WTC11 (cell line): ENCODE measurements at regions of chr17 and their contacts with region 1.

Region 1: DNA sequence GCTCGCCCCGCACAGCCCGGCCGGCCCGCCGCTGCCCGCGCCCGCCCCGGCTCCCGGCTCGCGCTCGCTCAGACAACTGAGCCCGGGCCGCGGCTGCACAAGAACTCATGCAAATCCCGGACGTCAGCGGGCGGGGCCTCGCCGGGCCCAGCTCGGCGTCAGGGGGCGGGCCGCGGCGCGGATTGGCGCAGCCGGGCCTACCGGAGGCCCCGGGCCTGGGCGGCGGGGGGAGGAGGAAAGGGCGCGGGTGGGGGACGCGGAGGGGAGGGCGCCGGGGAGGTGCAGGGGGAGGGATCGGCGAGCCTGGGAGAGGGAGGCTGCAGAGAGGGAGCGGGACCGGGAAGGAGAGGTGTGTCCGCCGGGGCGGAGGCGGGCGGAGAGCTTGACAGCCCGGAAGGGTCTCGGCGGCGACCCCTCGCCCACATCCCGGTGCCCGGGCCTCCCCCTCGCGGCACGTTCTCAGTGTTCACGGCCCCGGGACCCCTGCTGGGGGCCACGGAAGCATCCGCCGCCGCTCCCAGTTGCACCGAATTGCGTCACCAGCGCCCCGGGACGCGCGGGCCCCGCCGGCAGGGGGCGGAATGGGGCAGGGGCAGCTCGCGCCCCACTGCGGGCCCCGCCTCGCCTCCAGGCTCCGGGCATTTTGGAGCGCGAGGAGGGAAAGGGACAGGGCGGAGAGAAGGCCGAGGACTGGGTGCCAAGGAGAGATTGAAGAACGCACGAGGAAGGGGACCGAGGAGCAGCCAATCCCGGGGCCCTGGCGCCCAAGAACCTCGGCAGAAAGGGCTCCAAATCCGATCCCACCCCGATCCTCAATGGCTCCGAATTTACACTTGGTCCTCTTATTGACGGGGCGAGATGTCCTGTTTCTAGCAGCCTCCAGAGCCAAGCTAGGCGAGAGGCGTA is at the start of gene CBX4:
- DNase-seq: peak; percentile 91
- ATAC-seq: peak; percentile 24
- H3K4me3 Mint-ChIP-seq: peak within 1 kb of the TSS; percentile 72
- H3K27ac Mint-ChIP-seq: no peak within 1 kb of the TSS; the same call in 1 of the 2 replicates
- H3K4me1 Mint-ChIP-seq: peaks cover 31% of the 10 kb centered on the region
- H3K27me3 Mint-ChIP-seq: peaks cover 89% of the 10 kb centered on the region
- CTCF ChIP-seq: peak; percentile 57
- total RNA-seq, gene CBX4: 3.2 to 3.9 TPM (median 3.3 TPM) in 3 replicates

Region 2: DNA sequence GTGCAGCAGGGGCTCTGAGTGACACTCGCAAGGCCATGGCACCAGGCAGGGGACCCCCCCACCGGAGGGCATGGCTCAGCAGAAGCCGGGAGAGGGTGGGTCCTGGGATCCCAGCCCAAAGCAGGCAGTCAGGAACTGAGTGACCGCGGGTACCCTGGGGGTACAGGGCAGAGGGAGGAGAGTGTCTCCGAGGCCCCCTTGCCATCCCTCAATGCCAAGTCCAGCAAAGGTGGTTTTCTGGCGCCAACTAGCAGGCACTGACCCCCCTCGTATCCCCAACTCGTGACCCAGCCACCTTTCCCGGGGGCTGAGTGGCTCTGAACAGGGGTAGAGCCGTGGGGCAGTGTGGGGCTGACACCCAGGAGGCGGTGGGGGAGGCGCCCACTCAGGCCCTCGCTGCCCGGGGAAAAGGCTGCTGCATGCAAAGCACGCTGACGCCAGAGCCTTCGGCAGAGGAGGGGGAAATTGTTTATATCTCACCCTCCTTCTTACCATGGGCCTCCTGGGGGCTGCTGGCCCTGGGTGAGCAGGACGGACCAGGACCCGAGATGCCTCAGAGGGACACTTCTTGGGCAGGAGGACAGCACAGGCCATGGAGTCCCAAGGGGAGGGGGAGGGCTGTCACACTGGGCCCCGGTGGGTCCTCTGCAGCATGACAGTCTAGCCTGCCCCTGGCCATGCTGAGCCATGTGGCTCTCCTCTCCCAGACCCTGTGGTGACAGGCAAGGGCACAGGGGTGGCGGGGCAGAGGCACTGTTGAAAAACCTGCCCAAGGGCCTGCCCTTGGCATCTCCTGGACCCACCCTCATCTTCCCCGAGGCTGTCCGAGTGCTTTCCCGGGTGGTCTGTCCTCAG is 123.4 kb before region 1 on chr17:
- CTCF ChIA-PET with region 1: no interaction called
- POLR2A ChIA-PET with region 1: no interaction called
- DNase-seq: no peak
- ATAC-seq: no peak
- H3K4me3 Mint-ChIP-seq: no peak overlapping the region
- H3K27ac Mint-ChIP-seq: no peak overlapping the region
- H3K4me1 Mint-ChIP-seq: no peaks in the 10 kb centered on the region
- H3K27me3 Mint-ChIP-seq: peaks cover 4% of the 10 kb centered on the region; the same call in 1 of the 2 replicates
- CTCF ChIP-seq: no peak

Region 3: GRCh38 chr17:79741751-79742588 is 97.6 kb before region 1 on chr17:
- CTCF ChIA-PET with region 1: interaction called, 64 read pairs
- POLR2A ChIA-PET with region 1: no interaction called
- DNase-seq: peak; percentile 95
- ATAC-seq: peak; percentile 80
- H3K4me3 Mint-ChIP-seq: peak overlapping the region; percentile 53
- H3K27ac Mint-ChIP-seq: no peak overlapping the region
- H3K4me1 Mint-ChIP-seq: peaks cover 7% of the 10 kb centered on the region
- H3K27me3 Mint-ChIP-seq: peaks cover 68% of the 10 kb centered on the region
- CTCF ChIP-seq: peak; percentile 92

Region 4: GRCh38 chr17:79796763-79797491 is 42.7 kb before region 1 on chr17 and contains the start of gene CBX8:
- CTCF ChIA-PET with region 1: interaction called, 119 read pairs
- POLR2A ChIA-PET with region 1: interaction called, 11 read pairs
- DNase-seq: peak; percentile 100
- ATAC-seq: peak; percentile 71
- H3K4me3 Mint-ChIP-seq: peak within 1 kb of the TSS; percentile 68
- H3K27ac Mint-ChIP-seq: no peak within 1 kb of the TSS
- H3K4me1 Mint-ChIP-seq: peaks cover 47% of the 10 kb centered on the region
- H3K27me3 Mint-ChIP-seq: peaks cover 94% of the 10 kb centered on the region
- CTCF ChIP-seq: no peak
- total RNA-seq, gene CBX8: 1.8 to 2.1 TPM (median 2.0 TPM) in 3 replicates

Region 5: DNA sequence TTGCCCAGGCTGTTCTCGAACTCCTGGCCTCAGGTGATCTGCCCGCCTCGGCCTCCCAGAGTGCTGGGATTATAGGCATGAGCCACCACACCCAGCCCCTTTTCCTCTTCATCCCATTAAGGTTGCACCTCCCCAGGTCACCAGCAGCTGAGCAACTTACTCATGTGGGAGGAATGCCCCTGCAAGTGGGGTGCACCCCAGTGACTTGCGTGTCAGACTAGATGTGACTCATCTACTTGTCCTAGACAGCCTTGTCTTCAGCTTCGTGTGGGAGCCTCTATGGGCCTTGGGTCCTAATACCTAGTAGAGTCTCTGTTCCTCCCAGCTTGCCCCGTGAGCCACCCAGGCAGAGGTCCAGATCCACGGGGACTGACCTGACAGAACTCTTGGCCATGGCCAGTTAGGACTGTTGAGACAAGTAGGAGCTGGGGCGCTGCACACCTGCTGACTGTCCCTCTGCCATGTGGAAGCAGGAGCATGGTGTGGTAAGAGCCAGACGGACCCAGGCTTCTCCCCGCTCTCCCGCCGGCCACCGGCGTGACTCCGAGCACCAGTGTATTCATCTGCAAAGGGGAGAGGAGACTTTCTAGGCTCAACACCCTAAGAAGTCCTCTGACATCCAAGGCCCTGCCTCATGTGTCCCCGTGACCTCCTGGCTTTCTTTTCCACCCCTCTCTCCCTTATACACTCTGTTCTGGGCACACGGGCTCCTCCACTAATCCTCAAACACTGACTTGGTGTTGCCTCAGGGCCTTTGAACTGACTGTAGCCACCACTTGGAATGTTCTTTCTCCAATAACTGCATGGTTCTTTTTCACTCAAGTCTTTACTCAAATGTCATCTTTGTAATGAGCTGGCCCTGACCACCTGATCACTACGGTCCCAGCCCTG is 11.2 kb after region 1 on chr17:
- CTCF ChIA-PET with region 1: interaction called, 60 read pairs
- POLR2A ChIA-PET with region 1: interaction called, 3 read pairs
- DNase-seq: no peak
- ATAC-seq: no peak
- H3K4me3 Mint-ChIP-seq: no peak overlapping the region
- H3K27ac Mint-ChIP-seq: no peak overlapping the region
- H3K4me1 Mint-ChIP-seq: peaks cover 3% of the 10 kb centered on the region
- H3K27me3 Mint-ChIP-seq: peaks cover 31% of the 10 kb centered on the region
- CTCF ChIP-seq: no peak

Region 6: GRCh38 chr17:79923974-79924638 is 84.5 kb after region 1 on chr17:
- CTCF ChIA-PET with region 1: interaction called, 15 read pairs
- POLR2A ChIA-PET with region 1: interaction called, 4 read pairs
- DNase-seq: peak; percentile 97
- ATAC-seq: peak; percentile 86
- H3K4me3 Mint-ChIP-seq: no peak overlapping the region
- H3K27ac Mint-ChIP-seq: 0 out of 2 replicates have a peak overlapping the region, but pooled peaks have one; percentile 90
- H3K4me1 Mint-ChIP-seq: peaks cover 13% of the 10 kb centered on the region
- H3K27me3 Mint-ChIP-seq: peaks cover 7% of the 10 kb centered on the region
- CTCF ChIP-seq: peak; percentile 95

Region 7: DNA sequence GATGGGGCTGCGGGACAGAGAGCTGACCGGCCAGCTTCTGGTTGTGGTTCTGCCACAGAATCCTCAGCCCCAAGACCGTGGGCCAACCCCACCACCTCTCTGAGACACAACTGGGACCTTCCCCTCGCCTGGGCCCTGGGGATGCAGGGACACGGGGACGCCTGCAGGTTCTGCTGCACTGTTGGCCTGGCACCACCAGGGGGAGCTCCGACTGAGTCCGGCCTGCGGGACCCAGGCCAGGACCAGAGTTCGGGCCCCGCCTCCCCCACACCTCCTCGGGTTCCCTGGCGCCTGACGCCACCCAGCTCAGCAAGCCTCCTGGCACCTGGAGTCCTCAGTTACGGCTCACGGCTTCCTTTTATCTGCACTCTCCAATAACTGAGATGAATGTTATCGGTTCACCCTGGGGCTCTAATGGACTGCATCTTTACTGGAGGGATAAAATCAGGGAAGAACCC is 168.8 kb after region 1 on chr17:
- CTCF ChIA-PET with region 1: interaction called, 21 read pairs
- POLR2A ChIA-PET with region 1: no interaction called
- DNase-seq: peak; percentile 94
- ATAC-seq: peak; percentile 87
- H3K4me3 Mint-ChIP-seq: no peak overlapping the region
- H3K27ac Mint-ChIP-seq: no peak overlapping the region
- H3K4me1 Mint-ChIP-seq: peaks cover 5% of the 10 kb centered on the region
- H3K27me3 Mint-ChIP-seq: no peaks in the 10 kb centered on the region
- CTCF ChIP-seq: peak; percentile 94